Activated T-helper 1 cell treated with anti-CD3 and anti-CD28 coated beads, Interleukin-12 subunit alpha, Interleukin-12 subunit beta, Interleukin-2, Interleukin-4 antibody, amounts not matched to agents 30 ng/mL and 10 ng/mL and 1 ng/mL, durations not matched to agents 14 hours and 24 hours and 36 hours (primary cell): ENCODE measurements at regions of chr6 and their contacts with region 1.

Region 1: DNA sequence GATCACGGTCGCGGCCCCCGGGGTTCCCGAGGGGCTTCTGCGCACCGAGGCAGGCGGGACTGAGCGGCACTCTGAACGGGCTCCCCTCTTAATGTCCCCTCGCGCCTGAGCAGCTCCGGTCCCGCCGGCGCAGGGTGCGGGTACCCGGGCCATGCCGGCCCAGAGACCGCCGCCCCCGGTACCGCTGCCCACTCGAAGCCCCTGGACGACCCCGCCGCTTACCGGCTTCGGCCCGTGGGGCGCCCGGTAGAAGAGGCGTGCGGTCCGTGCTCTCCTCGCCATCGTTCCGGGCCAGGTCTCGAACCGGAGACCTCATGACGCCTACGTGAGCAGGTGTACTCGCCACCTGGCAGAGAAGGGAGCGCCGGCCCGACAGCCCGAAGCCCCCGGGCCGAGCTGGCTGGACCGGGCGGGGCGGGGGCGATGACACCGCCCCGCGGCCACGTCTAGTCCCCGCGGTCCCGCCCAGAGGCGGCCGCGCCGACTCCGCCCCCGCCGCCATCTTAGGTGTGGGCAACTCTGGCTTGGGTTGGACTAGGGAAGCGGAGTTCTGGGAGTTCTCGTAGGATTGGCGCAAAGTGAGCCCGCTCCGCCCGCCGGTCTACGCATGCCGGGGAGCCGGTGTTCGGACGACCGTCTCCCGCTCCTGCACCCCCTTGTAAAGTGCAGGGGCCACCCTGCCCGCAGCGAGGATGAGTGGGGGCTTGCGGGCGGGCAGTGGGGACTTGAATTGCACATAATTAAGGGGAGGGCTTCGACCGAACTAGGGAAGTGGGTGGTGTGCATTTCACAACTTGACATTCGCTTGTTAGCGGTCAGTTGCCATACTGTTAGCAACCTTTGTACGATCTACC is at the start of gene SLC17A5:
- DNase-seq: peak; percentile 84
- H3K4me3 Mint-ChIP-seq: peak within 1 kb of the TSS; percentile 95
- H3K27ac Mint-ChIP-seq: peak within 1 kb of the TSS; percentile 95
- H3K4me1 Mint-ChIP-seq: peaks cover 25% of the 10 kb centered on the region
- H3K27me3 Mint-ChIP-seq: no peaks in the 10 kb centered on the region
- total RNA-seq, gene SLC17A5: 4.5 and 5.1 TPM in 2 replicates

Region 2: DNA sequence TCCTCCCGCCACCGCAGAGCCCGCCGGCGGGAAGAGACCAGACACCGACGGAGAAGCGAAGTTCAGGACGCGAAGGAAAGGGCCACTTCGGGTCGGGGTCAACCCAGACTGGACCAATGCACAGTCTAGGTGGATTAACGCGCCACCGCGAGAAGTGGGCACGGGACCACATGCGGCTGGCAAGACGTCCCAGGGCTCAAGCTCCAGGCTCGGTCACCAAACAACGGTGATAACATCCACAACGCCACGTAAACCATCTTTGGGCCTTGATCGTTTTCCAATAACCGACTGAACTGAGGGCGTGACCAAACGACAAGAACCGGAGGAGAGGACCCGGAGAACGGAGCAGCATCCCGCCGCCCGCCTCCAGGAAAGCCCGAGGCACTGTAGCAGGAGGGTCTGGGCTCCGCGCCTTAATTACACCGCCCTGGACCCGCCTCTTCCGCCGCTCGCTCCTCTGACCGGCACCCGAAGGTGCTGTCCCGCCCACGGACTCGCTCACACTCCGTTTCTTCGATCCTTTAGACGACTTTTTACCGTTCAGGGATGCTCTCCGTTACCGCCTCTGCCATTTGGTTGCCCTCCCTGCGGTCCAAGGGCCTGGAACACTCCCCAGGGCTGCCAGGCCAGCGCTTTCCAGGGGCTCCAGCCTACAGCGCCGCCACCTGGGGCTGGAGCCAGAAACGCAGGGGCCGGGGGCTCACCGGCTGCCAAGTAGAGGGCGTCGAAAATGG is 343.9 kb before region 1 on chr6:
- intact Hi-C with region 1: loop called (anchors 5 kb)
- DNase-seq: peak; percentile 45
- H3K4me3 Mint-ChIP-seq: peak overlapping the region; percentile 95
- H3K27ac Mint-ChIP-seq: peak overlapping the region; percentile 72
- H3K4me1 Mint-ChIP-seq: peaks cover 25% of the 10 kb centered on the region
- H3K27me3 Mint-ChIP-seq: peaks cover 38% of the 10 kb centered on the region

Region 3: GRCh38 chr6:73461537-73462350 is 192.1 kb before region 1 on chr6 and contains the start of gene MTO1:
- intact Hi-C with region 1: loop called (anchors 1 kb)
- DNase-seq: peak; percentile 74
- H3K4me3 Mint-ChIP-seq: peak within 1 kb of the TSS; percentile 100
- H3K27ac Mint-ChIP-seq: peak within 1 kb of the TSS; percentile 100
- H3K4me1 Mint-ChIP-seq: peaks cover 54% of the 10 kb centered on the region
- H3K27me3 Mint-ChIP-seq: no peaks in the 10 kb centered on the region
- total RNA-seq, gene MTO1: 33.3 and 45.8 TPM in 2 replicates

Region 4: DNA sequence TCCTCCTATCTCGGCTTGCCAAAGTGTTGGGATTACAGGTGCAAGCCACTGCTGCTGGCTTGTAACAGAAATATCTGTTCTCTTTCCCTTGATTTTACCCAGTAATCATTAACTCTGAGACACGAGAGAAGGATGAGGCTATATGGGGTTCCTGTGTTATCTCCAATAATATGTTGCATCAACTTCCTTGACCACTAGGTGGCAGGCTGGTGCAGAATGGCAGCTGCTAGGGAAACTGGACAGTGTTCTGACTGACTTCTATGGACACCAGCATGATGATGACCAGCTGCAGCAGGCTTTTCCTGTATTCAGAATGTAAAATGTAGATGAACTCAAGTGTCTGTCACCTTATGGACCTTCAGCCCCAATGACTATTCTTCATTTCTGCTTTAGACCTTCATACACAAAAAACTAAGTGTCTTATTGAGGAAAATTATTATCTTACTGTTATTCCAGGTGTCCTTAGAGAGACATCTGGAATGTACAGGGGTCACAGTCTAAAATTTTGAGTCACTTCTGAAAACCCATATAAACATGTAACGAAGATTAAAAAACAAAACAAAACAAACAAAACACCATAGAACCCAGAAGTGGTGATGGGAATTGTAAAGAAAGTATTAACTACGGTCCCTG is 21.8 kb after region 1 on chr6:
- intact Hi-C with region 1: loop called (anchors 1 kb)
- DNase-seq: peak; percentile 57
- H3K4me3 Mint-ChIP-seq: no peak overlapping the region
- H3K27ac Mint-ChIP-seq: no peak overlapping the region
- H3K4me1 Mint-ChIP-seq: peaks cover 6% of the 10 kb centered on the region
- H3K27me3 Mint-ChIP-seq: peaks cover 16% of the 10 kb centered on the region

Region 5: GRCh38 chr6:73732845-73733675 is 79.3 kb after region 1 on chr6:
- intact Hi-C with region 1: loop called (anchors 1 kb)
- DNase-seq: peak; percentile 61
- H3K4me3 Mint-ChIP-seq: no peak overlapping the region
- H3K27ac Mint-ChIP-seq: peak overlapping the region; percentile 34
- H3K4me1 Mint-ChIP-seq: peaks cover 46% of the 10 kb centered on the region
- H3K27me3 Mint-ChIP-seq: no peaks in the 10 kb centered on the region